PC-9 (cell line): ENCODE measurements at regions of chr12 and their contacts with region 1.

Region 1: GRCh38 chr12:57546438-57547383 is at the start of gene DCTN2:
- DNase-seq: peak; percentile 89 to 93
- H3K4me3 ChIP-seq: peak within 1 kb of the TSS; percentile 59
- H3K27ac ChIP-seq: peak within 1 kb of the TSS; percentile 45
- H3K4me1 ChIP-seq: peaks cover 9% of the 10 kb centered on the region
- H3K27me3 ChIP-seq: no peaks in the 10 kb centered on the region
- CTCF ChIP-seq: no peak; the same call in 1 of the 2 replicates
- total RNA-seq, gene DCTN2: 93.4 and 105 TPM in 2 replicates

Region 2: DNA sequence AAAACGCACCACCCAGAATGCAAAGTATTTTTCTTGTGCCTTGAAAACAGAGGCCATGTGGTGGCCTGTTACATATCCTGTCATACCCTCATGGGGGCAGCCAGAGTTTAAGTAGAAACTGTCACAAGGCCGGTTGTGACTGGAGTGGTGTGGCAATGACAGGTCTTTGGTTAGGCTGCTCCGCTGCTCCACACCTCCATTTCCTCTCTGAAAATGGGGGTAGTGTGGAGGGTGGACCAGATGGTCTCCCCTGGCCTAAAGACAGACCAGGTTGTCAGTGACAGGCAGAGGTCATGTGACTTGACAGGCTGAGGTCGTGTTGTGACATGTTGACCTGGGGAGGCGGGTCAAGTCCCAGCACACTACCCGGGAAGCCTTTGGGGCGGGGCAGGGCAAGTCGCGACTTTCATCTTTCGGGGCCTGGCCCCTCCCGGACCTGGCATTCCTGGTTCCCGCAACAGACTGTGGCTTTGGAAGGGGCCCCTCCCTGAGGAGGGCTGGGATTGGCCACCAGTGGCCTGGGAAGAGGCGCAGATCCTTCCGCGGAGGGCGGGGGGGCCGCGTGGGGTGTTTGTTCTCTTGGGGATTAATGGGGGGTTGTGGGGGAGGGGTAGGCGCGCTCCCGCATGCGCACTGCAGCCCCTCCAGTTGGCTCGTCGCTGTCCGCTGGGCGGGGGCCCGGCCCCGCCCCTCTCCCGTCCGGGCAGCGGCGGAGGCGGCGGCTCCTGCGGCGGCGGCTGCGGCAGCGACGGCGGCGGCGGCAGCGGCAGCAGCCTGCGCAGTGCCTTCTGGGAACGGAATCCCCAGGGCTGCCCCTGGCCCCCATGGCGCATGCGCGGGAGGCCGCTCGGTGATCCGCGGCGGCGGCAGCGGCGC is 24.5 kb before region 1 on chr12 and contains the start of gene MBD6:
- CTCF ChIA-PET with region 1: no interaction called
- POLR2A ChIA-PET with region 1: no interaction called
- intact Hi-C with region 1: loop called (anchors 2 kb)
- DNase-seq: peak; percentile 72 to 87
- H3K4me3 ChIP-seq: peak within 1 kb of the TSS; percentile 98
- H3K27ac ChIP-seq: peak within 1 kb of the TSS; percentile 86
- H3K4me1 ChIP-seq: peaks cover 34% of the 10 kb centered on the region
- H3K27me3 ChIP-seq: no peaks in the 10 kb centered on the region
- CTCF ChIP-seq: no peak; the same call in 1 of the 2 replicates
- total RNA-seq, gene MBD6: 47.3 and 78.4 TPM in 2 replicates